ENCODE measurements at regions of chr11 and their contacts with region 1.

Region 1: GRCh38 chr11:35165423-35166368 is 26.7 kb downstream of the CD44 start:
- DNase-seq: peak; percentile 98
- H3K4me3 Mint-ChIP-seq: peak overlapping the region; percentile 78
- H3K27ac Mint-ChIP-seq: peak overlapping the region; percentile 99
- H3K4me1 Mint-ChIP-seq: peaks cover 93% of the 10 kb centered on the region
- H3K27me3 Mint-ChIP-seq: no peaks in the 10 kb centered on the region

Region 2: DNA sequence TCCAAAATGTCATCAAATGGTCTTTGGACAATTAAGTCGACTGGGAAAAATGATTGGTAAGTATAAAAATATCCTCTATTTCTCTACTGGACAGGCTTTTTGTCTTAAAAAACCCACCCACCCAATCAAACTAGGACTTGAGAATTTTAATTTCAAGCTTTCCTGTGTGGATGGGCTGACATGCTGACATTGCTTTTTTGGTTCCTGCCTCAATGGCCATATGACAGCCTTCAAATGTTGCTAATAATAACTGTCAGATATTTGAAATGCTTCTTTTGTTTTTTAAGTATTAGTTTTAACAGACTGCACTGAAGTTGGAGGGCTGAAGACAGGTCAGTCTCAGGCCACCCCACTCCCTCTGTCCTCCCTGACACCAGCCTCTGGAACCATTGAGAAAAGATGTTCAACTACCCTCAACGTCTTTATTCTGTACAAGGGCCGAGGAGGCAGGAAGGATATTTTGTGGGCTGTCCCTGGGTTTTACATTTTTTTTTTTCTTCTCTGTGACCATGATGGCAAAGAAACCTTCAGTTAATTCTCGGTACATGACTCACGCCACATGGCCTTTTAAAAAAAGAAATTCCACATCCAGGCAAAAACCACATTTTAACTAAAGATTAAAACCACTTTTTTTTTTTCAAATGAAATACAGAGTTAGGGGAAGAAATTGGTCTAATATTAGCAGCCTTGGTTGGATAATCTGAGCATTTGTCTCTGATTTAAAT is 123.3 kb after region 1 on chr11:
- intact Hi-C with region 1: no loop called
- DNase-seq: no peak
- H3K4me3 Mint-ChIP-seq: peak overlapping the region; percentile 19
- H3K27ac Mint-ChIP-seq: peak overlapping the region; percentile 70
- H3K4me1 Mint-ChIP-seq: peaks cover 29% of the 10 kb centered on the region
- H3K27me3 Mint-ChIP-seq: no peaks in the 10 kb centered on the region

Region 3: DNA sequence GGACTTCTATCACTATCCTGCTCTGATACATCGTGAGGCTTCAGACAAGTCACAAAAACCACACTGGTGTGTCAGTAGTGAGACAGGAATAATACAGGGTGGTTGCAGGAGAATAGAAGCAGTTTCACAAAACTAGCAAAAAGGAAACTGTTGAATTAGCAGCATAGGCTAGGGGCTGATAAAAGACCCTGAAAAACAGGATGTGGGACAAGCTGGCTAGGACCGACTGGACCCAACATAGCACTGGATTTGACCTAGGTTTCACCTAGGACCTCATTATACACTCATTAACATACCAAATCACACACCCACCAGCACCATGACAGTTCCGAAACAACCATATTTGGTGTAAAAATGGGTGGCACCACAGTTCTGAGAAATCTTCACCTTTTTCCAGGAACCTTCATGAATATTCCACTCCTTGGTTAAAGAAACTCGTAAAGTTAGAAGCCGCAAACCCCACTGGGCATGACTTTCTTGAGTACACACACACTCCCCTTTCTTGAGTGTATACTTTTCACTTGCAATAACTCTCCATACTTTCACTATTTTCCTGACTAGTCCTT is 177.4 kb after region 1 on chr11:
- intact Hi-C with region 1: loop called (anchors 2 kb)
- DNase-seq: peak; percentile 92
- H3K4me3 Mint-ChIP-seq: peak overlapping the region; percentile 68
- H3K27ac Mint-ChIP-seq: peak overlapping the region; percentile 89
- H3K4me1 Mint-ChIP-seq: peaks cover 37% of the 10 kb centered on the region
- H3K27me3 Mint-ChIP-seq: peaks cover 3% of the 10 kb centered on the region

Measured in activated CD4-positive, alpha-beta T cell treated with anti-CD3 and anti-CD28 coated beads, Interleukin-2, amount 10 ng/mL, durations not matched to agents 24 days and 14 days (primary cell).